Activated CD4-positive, alpha-beta memory T cell treated with anti-CD3 and anti-CD28 coated beads, Interleukin-2, amount 10 ng/mL, durations not matched to agents 7 days and 5 days (primary cell): ENCODE measurements at regions of chr1 and their contacts with region 1.

Region 1: DNA sequence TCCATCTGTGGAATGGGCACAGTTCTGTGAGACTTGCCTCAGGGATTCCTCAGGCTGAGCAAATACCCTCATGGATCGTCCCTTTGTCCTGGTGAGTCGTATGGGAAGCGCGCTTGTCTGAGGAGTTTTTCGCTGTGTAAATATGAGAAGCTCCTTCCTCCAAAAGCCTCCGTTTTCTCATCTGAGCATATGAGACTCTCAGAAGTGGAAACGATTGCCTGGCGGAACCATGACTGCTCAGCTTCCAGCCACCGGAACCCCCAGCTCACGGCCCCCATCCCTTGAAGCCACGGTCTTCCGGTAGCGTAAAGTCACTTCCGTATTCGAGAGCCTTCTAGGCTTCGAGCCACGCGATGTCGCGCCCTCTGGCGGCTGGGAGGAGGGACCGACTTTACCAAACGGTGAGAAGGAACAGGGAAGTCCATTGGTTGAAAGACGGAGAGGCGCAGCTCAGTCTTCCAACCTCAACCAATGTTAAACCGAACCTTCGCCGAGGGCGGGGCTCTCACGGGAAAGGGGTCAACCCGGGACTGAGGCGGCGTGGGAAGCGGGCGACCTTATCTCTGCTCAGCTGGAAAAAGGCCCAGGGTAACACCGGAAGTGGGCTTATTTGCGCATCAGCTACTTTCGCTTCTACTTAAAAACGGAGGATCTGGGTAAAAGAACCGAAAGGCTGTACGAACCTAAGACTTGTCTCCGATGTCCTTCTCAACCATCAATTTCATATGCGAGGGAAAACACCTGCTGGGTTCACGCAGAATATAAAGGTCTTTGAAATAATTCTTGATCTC is 46.2 kb downstream of the AZIN2 start:
- DNase-seq: peak; percentile 99
- H3K4me3 Mint-ChIP-seq: peak overlapping the region; percentile 93
- H3K27ac Mint-ChIP-seq: peak overlapping the region; percentile 95
- H3K4me1 Mint-ChIP-seq: peaks cover 51% of the 10 kb centered on the region
- H3K27me3 Mint-ChIP-seq: no peaks in the 10 kb centered on the region

Region 2: DNA sequence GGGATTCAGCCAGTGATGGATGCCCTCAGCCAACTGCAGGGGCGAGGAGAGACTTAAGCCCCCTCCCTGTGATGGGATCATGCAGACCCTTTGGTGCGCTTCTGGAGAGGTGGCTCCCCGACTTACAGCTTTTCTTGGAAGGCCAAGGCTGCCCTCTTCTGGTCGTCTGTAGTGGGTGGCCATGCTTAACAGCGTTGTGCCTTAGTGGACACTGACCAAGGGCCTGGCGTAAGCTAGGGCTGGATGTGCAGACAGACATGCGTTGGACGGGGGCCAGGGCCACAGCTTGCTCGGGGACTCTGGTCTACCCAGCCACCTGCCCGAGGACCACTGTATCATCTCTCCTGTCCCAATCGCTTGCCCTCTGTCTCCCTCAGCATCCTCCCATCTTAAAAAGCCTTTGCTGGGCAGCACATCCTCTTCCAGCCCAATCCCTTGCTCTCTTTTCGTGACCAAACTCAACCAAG is 40.8 kb before region 1 on chr1:
- CTCF ChIA-PET with region 1: interaction called, 94 read pairs
- POLR2A ChIA-PET with region 1: interaction called, 10 read pairs
- DNase-seq: peak; percentile 56
- H3K4me3 Mint-ChIP-seq: no peak overlapping the region
- H3K27ac Mint-ChIP-seq: no peak overlapping the region
- H3K4me1 Mint-ChIP-seq: peaks cover 32% of the 10 kb centered on the region
- H3K27me3 Mint-ChIP-seq: peaks cover 16% of the 10 kb centered on the region

Region 3: DNA sequence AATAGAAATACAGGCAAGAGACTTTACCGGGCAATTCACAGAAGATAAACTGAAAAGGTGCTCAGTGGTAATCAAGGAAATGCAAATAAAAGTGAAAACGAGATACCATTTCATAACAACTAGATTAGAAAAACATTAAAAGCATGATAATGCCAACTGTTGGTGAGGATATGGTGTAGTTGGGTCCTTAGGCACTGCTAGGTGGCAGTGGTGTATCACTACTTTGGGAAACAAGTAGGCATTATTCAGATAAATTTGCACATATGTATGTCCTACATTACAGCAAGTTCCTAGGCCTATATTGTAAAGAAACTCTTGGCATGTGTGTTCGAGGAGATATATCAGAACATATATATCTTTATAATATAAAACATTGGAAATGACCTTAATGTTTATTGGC is 15.2 kb before region 1 on chr1:
- CTCF ChIA-PET with region 1: interaction called, 11 read pairs
- POLR2A ChIA-PET with region 1: interaction called, 15 read pairs
- DNase-seq: peak; percentile 15
- H3K4me3 Mint-ChIP-seq: no peak overlapping the region
- H3K27ac Mint-ChIP-seq: no peak overlapping the region
- H3K4me1 Mint-ChIP-seq: no peaks in the 10 kb centered on the region
- H3K27me3 Mint-ChIP-seq: no peaks in the 10 kb centered on the region

Region 4: DNA sequence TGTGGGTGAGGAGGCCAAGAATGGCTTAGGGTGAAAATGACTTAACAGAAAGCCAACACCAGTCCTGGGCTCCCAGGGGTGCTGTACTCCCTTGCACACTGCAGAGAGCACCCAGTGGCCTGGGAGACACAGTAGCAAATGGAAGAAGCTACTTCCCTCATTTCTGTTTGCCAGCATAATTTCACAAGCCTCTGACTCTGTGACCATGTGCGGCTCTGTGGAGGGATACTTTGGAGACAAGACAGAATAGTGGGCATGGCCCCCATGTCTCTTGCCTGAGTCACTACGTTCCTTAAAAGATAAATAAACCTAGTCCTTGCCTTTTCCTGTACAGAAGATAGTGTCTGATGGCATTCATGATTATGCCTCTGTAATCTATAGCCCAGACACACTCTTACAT is 16.5 kb after region 1 on chr1:
- CTCF ChIA-PET with region 1: interaction called, 15 read pairs
- POLR2A ChIA-PET with region 1: interaction called, 18 read pairs
- DNase-seq: no peak
- H3K4me3 Mint-ChIP-seq: no peak overlapping the region
- H3K27ac Mint-ChIP-seq: no peak overlapping the region
- H3K4me1 Mint-ChIP-seq: peaks cover 10% of the 10 kb centered on the region
- H3K27me3 Mint-ChIP-seq: no peaks in the 10 kb centered on the region

Region 5: GRCh38 chr1:33349778-33350610 is 222.8 kb after region 1 on chr1:
- CTCF ChIA-PET with region 1: interaction called, 4 read pairs
- POLR2A ChIA-PET with region 1: interaction called, 12 read pairs
- DNase-seq: peak; percentile 84
- H3K4me3 Mint-ChIP-seq: peak overlapping the region; percentile 86
- H3K27ac Mint-ChIP-seq: peak overlapping the region; percentile 84
- H3K4me1 Mint-ChIP-seq: peaks cover 47% of the 10 kb centered on the region
- H3K27me3 Mint-ChIP-seq: peaks cover 3% of the 10 kb centered on the region